HAP-1 (cell line): ENCODE measurements at regions of chr4 and their contacts with region 1.

Region 1: DNA sequence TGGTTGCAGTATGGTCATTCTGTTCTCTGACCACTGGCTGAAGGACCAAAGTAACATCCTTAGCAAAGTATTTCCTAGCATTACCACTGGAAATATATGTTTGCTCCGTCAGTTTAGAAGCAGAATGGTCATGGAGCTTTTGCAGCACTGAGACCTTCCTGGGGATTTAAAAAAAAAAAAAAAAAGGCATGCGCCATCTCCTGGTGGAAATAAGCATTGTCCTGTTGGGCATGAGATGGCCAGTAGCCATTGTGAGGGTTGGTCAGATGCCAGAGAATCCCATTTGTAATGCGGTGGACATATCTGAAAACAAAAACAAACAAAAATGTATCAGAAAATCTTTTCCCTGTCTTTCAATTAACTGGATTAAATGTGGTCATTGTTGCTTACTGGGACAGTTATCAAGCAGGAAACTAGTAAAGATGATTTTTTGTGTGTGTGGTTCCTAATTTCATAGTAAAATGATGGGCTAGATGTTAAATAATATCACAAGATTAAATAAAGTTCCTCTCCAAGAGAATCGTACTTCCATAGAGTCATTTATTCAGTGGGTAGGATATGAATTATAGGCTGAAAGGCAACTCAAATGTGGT is 139.6 kb downstream of the SOWAHB start:
- DNase-seq: peak; percentile 34 to 59
- H3K4me3 ChIP-seq: no peak overlapping the region
- H3K4me1 ChIP-seq: no peaks in the 10 kb centered on the region
- H3K27me3 ChIP-seq: no peaks in the 10 kb centered on the region

Region 2: DNA sequence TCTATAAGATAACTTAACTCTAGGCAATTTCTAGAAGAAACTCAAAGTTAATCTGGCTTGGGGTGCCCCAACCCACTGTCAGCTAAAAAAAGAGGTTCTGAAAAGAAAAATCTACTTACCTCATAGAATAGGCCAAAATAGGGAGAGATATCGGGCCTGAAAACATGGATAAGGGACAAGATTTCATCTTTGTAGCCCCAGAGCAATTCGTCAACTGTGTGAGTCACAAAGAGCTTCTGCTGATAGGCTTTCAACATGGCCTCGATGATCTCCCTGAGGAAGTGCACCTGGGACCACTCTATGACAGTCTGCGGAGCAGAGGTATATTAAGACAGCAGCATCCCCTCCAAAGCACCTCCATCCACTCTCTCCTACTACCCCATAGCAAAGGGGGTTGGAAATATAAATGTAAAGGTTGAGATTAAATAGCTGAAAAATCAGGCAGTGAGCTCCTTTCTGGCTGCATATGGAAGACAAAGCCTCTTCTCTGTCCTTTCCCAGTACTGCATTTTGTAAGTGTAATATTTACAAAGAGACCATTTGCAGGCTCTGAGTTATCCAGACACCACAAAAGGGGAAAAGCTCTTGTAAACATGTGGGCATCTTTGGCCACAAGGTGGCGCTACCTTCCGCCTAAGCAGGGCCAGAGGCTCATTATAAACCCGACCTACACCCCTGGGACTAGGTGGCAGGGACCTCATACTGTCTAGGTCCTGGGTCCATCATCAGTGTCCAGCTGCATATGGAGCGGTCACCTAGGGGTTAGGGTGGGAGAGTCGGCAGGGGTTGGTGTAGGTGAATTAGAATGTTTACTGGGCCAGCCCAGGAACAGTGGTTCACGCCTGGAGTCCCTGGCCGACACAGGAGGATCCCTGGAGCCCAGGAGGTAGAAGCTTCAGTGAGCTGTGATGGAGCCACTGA is 578.7 kb before region 1 on chr4:
- in situ Hi-C with region 1: loop called (anchors 25 kb)
- DNase-seq: peak; percentile 67 to 92
- H3K4me3 ChIP-seq: no peak overlapping the region
- H3K4me1 ChIP-seq: no peaks in the 10 kb centered on the region
- H3K27me3 ChIP-seq: no peaks in the 10 kb centered on the region

Region 3: DNA sequence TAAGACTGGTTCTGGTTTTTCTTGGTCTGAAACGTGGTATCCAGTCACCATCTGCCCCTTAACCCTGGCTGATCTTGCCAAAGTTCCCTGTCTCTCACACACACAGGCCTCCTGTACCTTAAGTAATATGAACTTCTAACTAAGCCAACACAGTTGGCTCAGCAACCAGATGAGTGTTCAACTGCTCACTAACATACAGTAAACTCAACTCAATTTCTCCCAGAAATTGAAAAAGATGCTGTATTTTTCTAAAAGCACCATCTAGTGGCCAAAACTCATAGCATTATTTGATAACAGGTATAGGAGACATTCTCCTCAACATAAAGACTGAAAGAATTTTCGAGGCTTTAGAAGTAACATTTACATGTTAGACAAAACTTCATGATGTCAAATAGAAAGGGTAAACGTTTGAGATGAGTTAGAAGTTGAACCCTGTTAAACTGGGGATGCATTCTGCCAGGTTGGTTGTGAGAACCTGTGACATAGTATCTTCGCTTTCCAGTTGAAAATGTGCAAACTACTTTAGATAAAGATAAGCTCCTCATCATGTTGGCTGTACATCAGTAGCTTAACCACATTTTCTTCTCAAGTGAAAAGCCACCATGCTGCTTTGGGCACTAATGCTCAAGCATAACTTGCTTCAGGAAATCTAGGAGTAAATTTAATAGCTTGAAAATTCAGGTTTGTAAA is 286.2 kb after region 1 on chr4:
- in situ Hi-C with region 1: no loop called
- DNase-seq: peak in 1 of 2 experiments; percentile 39
- H3K4me3 ChIP-seq: no peak overlapping the region
- H3K4me1 ChIP-seq: no peaks in the 10 kb centered on the region; the same call in 1 of the 2 replicates
- H3K27me3 ChIP-seq: no peaks in the 10 kb centered on the region

Region 4: DNA sequence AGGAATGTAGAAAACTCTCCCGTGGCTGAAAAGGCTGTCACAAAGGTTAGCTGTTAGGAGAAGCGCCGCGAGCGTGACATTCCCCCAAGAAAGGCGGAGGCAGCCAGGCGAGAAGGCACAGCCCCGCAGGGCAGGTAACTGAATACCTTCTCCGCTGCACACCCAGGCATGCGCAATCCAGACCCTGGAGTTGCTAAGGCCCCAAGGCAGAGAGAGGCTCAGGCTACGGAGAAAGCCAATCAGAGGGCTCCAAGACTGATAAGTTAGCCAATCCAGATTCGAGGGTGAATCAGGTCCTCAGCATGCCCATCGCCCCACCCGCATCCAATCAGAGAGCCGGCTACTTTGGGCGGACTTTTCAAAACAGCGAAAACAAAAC is 398.1 kb after region 1 on chr4:
- in situ Hi-C with region 1: no loop called
- DNase-seq: peak; percentile 97 to 99
- H3K4me3 ChIP-seq: peak overlapping the region; percentile 84
- H3K4me1 ChIP-seq: peaks cover 22% of the 10 kb centered on the region
- H3K27me3 ChIP-seq: no peaks in the 10 kb centered on the region